H1 (cell line): ENCODE measurements at regions of chr13 and their contacts with region 1.

Region 1: DNA sequence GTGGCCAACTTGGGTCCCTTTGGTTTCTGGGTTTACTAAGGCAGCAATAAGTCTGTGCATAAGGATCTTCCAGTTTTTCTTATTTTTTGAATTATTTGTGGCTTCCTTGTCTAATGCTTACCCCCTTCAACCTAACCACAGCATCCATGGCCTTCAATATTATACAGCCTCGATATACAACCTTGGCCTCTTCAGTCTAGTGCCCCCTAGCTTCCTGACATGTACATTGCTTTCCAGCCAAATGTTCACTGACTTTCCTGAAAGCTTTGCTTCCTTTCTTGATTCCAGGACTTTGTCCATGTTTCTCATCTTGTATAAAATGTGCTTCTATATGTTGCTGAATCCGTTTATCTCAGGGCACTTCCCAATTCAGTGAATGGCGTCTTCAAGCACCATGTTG is 310.1 kb downstream of the OLFM4 start:
- DNase-seq: no peak
- H3K4me3 ChIP-seq: no peak overlapping the region
- H3K27ac ChIP-seq: no peak overlapping the region
- H3K4me1 ChIP-seq: peaks cover 5 to 12% (median 10%) of the 10 kb centered on the region in 4 experiments
- H3K27me3 ChIP-seq: peaks cover 4 to 22% (median 10%) of the 10 kb centered on the region in 4 experiments; a peak in 4 of 7 replicates
- CTCF ChIP-seq: peak in 1 of 3 experiments; percentile 50; a peak in 1 of 4 replicates
- EP300 ChIP-seq: no peak
- POLR2A ChIP-seq: no peak
- RAD21 ChIP-seq: no peak

Region 2: DNA sequence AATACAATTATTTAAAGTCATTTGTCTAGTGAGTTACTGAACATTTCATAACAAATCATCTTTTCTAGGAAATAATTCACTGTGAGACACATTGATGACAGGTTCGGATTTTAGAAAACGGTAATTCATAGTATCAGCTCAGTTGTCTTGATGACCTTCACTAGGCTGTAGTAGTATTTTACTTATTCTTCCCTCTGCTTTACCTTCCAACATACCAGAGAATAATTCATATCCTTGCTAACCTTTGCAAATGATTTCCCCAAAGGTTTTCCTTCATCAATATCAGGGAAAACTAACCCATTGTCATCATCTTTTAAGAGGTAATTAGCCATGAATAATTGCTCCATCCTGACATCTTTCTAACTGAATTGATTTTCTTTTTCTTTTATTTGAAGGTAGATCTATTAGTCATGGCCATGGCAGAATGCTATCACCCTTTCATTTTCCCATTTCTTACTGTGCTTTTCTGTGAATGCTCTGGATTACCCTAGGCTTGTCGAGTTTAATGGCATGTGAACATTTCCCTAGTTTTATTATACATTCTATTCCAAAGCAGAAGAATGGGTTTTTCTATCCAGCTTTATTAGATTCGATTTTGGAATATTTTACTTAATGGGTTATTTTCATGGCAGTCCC is 11.0 kb before region 1 on chr13:
- CTCF ChIA-PET with region 1: interaction called, 15 read pairs
- POLR2A ChIA-PET with region 1: interaction called, 3 read pairs
- DNase-seq: no peak
- H3K4me3 ChIP-seq: no peak overlapping the region
- H3K27ac ChIP-seq: no peak overlapping the region
- H3K4me1 ChIP-seq: no peaks in the 10 kb centered on the region
- H3K27me3 ChIP-seq: no peaks in the 10 kb centered on the region
- CTCF ChIP-seq: no peak
- EP300 ChIP-seq: no peak
- POLR2A ChIP-seq: no peak
- RAD21 ChIP-seq: no peak